Posterior cingulate gyrus (tissue), 11 donors: ENCODE measurements at regions of chr11 and their contacts with region 1.

Region 1: DNA sequence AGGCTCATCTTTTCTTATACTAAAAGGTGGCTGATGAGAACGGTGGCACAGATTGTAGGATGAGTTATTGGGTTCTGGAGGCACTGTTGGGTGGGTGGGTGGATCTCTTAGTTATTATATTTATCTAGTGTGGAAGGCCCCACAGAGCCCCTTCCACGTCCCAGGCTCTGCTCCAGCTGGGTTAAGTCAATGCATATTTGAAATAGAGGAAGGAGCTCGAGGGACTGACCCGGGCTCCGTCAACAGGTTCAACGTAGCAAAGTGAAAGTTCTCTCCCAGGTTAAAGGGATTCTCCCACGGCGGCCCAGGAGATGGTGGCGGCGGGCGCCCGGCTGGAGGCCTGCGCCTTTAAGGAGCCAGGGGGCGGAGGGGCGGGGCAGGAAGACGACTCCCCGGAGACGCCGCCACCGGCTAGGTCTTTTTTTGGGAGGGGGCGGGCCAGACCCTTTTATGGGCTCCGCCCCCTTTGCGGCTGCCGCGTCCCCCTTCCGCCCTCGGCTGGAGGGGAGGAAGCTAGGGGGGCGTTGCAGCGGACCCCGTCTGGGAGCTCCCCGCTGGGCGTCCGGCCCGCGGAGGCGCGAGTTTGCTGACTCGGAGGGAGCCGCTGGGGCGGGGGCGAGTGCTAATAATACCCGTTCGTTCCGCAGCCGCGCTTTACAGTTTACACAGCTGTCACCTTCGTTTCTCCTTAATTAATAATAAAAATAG is 1.5 kb upstream of the INPPL1 start:
- DNase-seq: peak; percentile 70 to 97 (median 86)

Region 2: DNA sequence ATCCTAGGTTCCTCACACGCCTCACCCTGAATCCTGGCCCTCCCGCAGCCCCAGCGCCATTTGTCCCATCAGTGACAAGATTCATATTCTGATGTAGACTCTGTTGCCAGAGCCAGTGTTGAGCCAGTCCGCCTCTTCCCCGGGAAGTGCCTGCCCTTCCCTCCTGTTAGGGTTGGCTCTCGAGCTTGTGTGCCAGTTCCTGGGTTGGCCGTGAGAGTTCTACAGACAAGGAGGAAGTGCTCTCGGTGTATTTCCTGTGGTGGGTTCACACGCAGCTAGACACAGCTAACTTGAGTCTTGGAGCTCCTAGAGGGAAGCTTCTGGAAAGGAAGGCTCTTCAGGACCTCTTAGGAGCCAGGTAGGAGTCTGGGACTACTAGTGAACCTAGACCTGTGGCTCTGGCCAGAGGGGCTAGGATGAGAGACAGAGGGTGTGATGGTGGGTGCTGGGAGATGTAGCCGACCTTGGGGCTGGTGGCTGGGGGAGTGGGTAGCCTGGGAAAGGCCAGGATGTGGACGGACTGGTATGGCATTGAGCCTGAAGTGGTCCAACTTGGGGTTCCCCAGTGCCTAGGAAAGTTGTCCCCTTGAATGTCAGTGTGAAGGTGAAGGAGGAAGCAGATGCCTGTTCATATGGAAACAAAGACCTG is 224.3 kb before region 1 on chr11 and contains the start of gene IL18BP:
- intact Hi-C with region 1: no loop called
- DNase-seq: peak in 1 of 10 donors; percentile 73

Region 3: DNA sequence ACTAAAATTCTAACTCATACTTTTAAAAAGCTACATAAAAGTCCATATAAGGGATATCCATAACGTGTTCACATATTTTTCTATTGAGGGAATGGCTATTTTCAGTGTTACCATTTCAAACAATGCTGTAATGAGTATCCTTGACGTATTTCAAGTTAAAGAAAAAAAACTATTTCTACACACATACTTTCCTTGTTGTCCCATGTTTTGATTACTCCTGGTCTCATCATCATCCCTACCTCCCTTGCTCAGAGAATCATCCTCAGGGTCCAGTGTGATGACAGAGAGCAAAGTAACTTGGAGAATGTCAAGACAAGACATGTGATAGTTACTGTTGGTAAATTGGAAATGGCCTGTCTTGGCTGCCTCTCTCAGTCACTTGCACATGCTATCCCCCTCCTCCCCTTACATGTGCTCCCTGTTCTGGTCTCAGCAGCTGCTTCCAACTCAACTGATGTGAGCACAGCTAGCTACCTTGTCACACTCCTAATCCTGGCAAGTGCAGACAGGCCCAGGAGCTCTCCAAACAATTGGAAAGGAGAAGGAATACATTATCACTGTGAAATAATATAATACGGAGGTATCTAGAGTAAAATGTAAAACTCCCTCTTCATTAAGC is 164.5 kb before region 1 on chr11:
- intact Hi-C with region 1: no loop called
- DNase-seq: no peak

Region 4: DNA sequence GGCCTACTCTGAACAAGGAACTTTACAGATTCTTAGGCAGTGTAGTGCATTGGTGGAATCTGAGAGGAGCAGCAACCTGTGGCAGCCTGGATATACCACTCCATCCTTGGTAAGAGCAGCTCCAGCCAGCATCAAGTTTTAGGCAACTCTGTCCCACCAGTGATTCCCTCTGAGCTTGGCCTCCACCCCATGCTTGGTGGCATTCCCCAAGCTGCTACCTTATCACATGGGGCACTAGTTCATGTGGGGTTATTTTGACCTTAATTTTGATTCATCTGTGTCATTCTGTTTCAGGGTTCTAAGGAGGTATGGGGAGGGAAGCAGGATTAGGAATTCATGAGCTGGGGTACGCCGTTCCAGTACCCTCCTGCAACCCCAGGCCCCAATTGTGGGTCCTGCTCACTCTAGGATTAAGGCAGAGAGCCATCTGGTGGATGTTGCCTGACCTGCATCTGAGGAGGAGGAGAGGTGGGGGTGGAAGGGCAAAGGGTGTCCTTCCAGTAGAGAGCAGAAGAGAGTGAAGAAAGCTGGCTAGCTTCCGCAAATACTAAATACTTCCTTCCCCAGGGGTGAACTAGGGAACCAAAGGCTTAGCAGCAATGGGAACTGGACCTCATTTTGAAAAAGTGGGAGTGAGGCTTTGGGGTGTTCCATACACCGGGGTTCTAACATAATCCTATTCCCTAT is 131.9 kb before region 1 on chr11:
- intact Hi-C with region 1: no loop called
- DNase-seq: peak in 8 of 10 donors; percentile 64 to 93 (median 77)

Region 5: DNA sequence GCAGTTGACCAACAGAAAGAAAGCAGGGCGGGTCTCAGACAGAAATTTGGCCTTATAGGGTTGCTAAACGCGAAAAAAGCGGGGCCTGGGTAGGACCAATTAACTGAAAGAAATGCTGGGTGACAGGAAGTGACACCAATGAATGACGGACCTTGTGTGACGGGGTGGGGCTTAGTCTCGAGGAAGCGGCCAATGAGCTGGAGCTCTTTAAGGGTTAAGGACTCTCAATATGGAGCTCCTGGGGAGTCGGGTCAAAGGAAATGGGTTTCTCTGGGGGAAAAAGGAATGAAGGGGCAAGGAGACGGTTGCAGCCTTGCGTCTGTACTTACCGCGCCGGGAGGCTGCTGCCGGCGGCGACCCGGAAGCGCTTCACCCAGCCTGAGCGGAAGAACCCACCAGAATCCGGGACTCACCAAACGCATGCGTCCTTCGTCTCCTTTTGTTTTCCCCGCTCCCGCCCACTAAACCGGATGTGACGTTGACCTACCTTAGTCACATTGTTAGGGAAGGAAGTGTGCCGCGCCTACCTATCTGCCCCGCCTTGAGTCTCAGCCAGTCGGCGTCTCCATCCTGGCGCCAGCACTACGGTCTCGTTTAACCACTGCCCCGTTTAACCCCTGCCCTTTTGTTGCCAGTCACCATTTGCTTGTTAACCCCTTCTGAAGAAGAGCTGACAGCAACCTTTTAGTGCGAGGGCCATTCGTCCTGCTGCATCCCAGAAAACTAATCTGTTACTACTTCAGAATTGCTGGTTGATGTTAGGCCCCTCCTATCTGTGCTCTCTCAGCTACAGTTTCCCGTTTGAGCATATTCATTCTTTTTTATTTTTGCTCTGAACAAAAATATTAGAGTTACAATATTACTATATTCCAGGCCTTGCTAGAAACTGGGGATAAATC is 110.5 kb before region 1 on chr11 and contains the start of gene ANAPC15:
- intact Hi-C with region 1: loop called (anchors 10 kb)
- DNase-seq: peak; percentile 90 to 99 (median 93)

Region 6: GRCh38 chr11:72413914-72414628 is 191.0 kb after region 1 on chr11:
- intact Hi-C with region 1: loop called (anchors 10 kb)
- DNase-seq: peak; percentile 65 to 97 (median 83)